Naive thymus-derived CD4-positive, alpha-beta T cell (primary cell): ENCODE measurements at regions of chr20 and their contacts with region 1.

Region 1: DNA sequence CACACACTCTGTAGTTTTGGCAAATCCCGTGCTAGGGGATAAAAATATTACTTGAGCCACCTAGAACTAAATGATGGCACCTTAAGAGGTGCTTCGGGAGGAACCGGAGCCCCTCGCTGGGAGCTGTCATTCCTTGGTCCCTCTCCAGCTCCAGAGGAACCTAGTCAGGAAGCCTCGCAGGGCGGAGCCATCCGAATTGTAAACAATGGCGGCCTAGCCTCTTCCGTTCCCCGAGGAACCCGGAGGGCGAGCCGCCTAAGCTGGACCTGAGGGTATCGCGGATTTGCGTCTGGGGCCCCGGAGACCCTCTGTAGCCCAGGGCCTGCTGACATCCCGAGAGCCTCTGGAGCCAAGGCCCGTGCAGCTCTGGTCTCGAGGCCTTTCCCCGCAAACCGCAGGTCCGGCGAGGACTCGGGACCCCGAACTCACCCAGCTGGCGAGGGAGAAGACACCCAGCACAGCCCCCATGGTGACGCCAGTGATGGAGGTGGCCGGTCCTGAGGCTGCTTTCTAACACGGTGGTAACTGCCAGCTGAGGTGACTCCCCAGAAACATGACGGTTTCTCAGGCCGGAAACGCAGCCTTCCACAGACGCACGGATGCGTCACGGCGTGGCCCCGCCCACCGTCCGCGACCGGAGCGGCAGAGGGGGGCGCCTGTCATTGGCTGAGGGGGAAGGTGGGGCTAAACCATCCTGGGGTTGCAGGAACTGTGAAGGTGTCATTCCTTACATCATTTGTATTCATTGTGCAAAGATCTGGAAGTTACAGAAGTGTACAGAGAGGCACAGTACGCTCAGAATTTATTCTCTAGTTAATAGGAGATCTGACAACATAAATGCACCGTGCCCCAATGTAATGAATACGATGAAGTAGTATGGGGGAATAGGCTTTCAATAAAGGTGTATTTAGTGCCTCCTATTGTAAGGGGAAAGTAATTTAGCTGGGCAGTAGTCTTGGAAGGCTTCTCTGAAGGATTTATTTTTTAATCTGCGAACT is at the start of gene SERINC3:
- DNase-seq: peak; percentile 96 to 99 (median 98)
- ATAC-seq: peak; percentile 99
- H3K4me3 ChIP-seq: peak within 1 kb of the TSS; percentile 95
- H3K4me3 Mint-ChIP-seq: peak within 1 kb of the TSS; percentile 82 to 93 (median 88)
- H3K27ac ChIP-seq: peak within 1 kb of the TSS; percentile 99
- H3K27ac Mint-ChIP-seq: peak within 1 kb of the TSS; percentile 87 to 99 (median 96)
- H3K4me1 ChIP-seq: peaks cover 30 to 34% of the 10 kb centered on the region in 2 donors
- H3K4me1 Mint-ChIP-seq: peaks cover 31 to 68% (median 58%) of the 10 kb centered on the region in 7 donors
- H3K27me3 ChIP-seq: no peaks in the 10 kb centered on the region
- H3K27me3 Mint-ChIP-seq: no peaks in the 10 kb centered on the region
- total RNA-seq, gene SERINC3: 59.7 to 85.3 (median 78.9) TPM

Region 2: GRCh38 chr20:43456809-43457639 is 1064.8 kb before region 1 on chr20:
- CTCF ChIA-PET with region 1: no interaction called
- POLR2A ChIA-PET with region 1: no interaction called
- intact Hi-C with region 1: loop called in 1 of 2 experiments (anchors 5 kb)
- DNase-seq: peak in 7 of 9 donors; percentile 73 to 92 (median 91)
- ATAC-seq: peak; percentile 82
- H3K4me3 ChIP-seq: peak overlapping the region; percentile 86
- H3K4me3 Mint-ChIP-seq: peak overlapping the region; percentile 79 to 100 (median 94)
- H3K27ac ChIP-seq: peak overlapping the region; percentile 100
- H3K27ac Mint-ChIP-seq: peak overlapping the region; percentile 96 to 100 (median 99)
- H3K4me1 ChIP-seq: peaks cover 10 to 29% of the 10 kb centered on the region in 2 donors
- H3K4me1 Mint-ChIP-seq: peaks cover 24 to 42% (median 35%) of the 10 kb centered on the region in 7 donors
- H3K27me3 ChIP-seq: no peaks in the 10 kb centered on the region
- H3K27me3 Mint-ChIP-seq: peaks cover 0 to 14% (median 4%) of the 10 kb centered on the region in 5 donors

Region 3: GRCh38 chr20:44153636-44154043 is 368.1 kb before region 1 on chr20:
- CTCF ChIA-PET with region 1: no interaction called
- POLR2A ChIA-PET with region 1: no interaction called
- intact Hi-C with region 1: loop called in 1 of 2 experiments (anchors 1 kb)
- DNase-seq: peak in 8 of 9 donors; percentile 15 to 77 (median 66)
- ATAC-seq: peak; percentile 90
- H3K4me3 ChIP-seq: no peak overlapping the region
- H3K4me3 Mint-ChIP-seq: peak overlapping the region; percentile 14 to 75 (median 58)
- H3K27ac ChIP-seq: peak overlapping the region; percentile 71
- H3K27ac Mint-ChIP-seq: peak overlapping the region; percentile 34 to 98 (median 92)
- H3K4me1 ChIP-seq: peaks cover 0 to 10% of the 10 kb centered on the region in 2 donors
- H3K4me1 Mint-ChIP-seq: peaks cover 3 to 27% (median 16%) of the 10 kb centered on the region in 7 donors
- H3K27me3 ChIP-seq: no peaks in the 10 kb centered on the region
- H3K27me3 Mint-ChIP-seq: peaks cover 8 to 17% (median 14%) of the 10 kb centered on the region in 5 donors

Region 4: DNA sequence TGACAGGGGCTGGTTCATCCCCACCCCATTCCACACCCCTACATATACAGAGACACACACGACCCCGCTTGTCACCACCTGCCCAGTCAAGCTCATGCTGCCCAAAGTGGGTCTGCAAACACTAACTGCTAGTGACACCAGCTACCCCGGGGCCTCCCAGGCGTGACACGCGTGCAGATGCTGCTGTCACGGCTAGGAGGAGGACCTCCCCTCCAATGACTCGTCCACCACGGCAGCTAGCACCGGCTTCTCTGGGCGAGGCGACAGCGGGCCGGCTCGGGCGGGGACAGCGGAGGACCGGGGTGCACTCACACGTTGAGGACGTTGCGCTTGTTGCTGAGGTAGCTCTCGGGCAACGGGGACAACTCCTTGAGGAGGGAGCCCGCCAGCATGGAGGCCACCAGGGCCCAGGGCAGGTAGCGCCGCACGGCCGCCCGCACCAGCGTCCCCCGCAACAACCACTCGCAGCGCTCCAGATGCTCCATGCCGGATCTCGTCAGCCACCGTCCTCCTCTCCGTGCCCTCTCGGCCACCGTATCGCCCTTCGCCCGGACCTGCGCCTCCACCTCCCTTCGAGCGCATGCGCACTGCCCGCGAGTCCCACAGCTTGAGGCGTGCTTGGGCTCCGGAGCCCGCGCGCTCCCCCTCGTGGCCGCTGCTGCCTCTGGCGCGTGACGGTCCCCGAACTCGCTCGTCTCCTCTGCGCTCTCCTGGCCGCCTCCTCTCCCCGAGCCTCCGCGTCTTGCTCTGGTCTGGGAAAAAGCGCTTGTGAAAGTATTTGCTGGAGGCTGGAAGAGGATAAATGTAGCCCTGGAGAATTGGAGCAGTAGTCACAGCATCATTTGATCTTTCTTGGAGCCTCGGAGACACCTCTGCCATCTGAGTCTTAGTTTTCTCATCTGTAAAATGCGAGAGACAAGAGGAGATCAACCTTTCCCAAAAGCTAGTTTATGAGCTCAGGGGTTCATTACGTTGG is 210.8 kb before region 1 on chr20 and contains the start of gene FITM2:
- CTCF ChIA-PET with region 1: no interaction called
- POLR2A ChIA-PET with region 1: interaction called, 3 read pairs
- intact Hi-C with region 1: loop called in 1 of 2 experiments (anchors 5 kb)
- DNase-seq: peak; percentile 96 to 99 (median 98)
- ATAC-seq: peak; percentile 99
- H3K4me3 ChIP-seq: peak within 1 kb of the TSS; percentile 98
- H3K4me3 Mint-ChIP-seq: peak within 1 kb of the TSS; percentile 87 to 97 (median 95)
- H3K27ac ChIP-seq: peak within 1 kb of the TSS; percentile 82
- H3K27ac Mint-ChIP-seq: peak within 1 kb of the TSS; percentile 91 to 98 (median 93)
- H3K4me1 ChIP-seq: peaks cover 12 to 18% of the 10 kb centered on the region in 2 donors
- H3K4me1 Mint-ChIP-seq: peaks cover 15 to 35% (median 28%) of the 10 kb centered on the region in 7 donors
- H3K27me3 ChIP-seq: no peaks in the 10 kb centered on the region
- H3K27me3 Mint-ChIP-seq: peaks cover 0 to 8% (median 0%) of the 10 kb centered on the region in 5 donors
- total RNA-seq, gene FITM2: 3.1 to 7.9 (median 5.0) TPM

Region 5: DNA sequence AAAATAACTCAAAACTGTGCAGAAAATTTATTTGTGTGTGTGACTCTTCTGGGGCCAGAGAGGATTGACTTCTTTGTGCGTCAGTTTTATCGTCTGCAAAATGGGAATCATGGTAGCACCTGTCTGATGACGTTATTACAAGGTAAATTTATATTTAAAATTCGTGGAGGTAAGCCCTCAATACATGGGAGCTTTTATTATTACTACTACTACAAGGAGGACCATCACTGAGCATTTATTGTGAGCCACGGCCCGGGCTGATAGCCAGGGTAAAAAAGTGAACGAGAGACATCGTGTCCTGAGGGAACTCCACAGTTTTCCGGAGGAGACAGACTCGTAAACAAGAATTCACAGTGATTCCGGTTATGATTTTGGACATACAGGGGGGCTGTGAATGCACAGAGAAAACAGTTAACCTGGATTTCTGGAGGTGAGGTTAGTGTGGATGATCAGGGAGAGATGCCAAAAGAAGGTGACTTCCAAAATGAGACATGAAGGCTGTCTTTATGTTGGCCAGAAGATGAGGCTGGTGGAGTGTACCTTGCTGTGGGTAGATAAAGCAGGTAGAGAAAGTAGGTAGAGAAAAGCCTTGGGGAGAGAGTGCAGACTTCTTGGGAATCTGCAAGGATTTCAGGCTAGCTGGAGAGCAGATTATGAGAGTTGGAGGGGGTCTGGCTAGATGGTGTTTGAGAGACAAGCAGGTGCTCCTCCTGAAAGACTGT is 10.6 kb after region 1 on chr20:
- CTCF ChIA-PET with region 1: no interaction called
- POLR2A ChIA-PET with region 1: interaction called, 5 read pairs
- intact Hi-C with region 1: loop called (anchors 1 kb)
- DNase-seq: peak in 2 of 9 donors; percentile 15 to 20
- ATAC-seq: peak; percentile 6
- H3K4me3 ChIP-seq: peak overlapping the region; percentile 83
- H3K4me3 Mint-ChIP-seq: no peak overlapping the region
- H3K27ac ChIP-seq: peak overlapping the region; percentile 71
- H3K27ac Mint-ChIP-seq: no peak overlapping the region
- H3K4me1 ChIP-seq: peaks cover 5 to 19% of the 10 kb centered on the region in 2 donors
- H3K4me1 Mint-ChIP-seq: peaks cover 0 to 8% (median 4%) of the 10 kb centered on the region in 7 donors
- H3K27me3 ChIP-seq: no peaks in the 10 kb centered on the region
- H3K27me3 Mint-ChIP-seq: peaks cover 0 to 11% (median 0%) of the 10 kb centered on the region in 5 donors

Region 6: DNA sequence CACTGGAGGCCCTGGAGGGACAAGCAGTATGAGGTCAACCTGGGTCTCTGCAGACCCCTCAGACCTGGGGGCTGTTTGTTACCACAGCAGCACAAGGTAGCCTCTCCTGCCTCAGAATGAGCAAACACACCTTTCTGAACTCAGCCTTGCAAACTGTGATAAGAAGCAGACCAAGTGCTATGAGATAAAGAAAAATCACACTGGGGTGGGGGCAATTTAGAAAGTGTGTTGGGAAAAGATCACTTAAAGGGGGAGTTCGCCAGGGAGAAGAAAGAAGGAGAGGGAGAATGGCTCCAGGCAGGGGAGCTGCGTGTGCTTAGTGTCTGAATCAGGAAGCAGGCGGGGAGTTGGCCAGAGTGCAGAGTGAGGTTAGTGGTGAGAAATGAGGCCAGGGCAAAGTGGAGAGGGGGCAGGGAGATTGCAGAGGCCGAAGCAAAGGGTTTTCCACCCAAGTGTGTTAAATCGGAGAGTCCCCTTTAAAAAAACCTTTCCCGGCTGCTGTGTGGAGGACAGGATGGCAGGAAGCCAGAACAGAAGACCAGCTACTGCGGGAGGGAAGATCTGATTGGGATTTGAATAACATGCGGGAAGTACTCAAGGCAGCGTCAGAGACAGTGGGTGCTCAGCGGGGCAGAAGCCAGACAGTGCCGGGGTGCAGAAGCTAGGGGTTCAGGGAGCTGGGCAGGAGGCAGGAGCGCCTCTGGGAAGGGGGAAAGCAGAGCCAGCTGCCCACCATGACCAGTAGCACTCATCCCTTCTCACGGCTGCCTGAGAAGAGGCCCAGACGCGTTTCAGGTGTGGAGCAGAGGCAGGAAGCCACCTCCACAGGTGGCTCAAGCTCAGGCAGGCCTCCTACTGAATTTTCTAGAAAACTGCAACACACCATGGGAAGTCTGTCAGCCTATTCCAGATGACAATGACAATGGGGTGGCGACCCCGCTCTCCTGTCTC is 120.7 kb after region 1 on chr20:
- CTCF ChIA-PET with region 1: no interaction called
- POLR2A ChIA-PET with region 1: interaction called, 4 read pairs
- intact Hi-C with region 1: loop called (anchors 1 to 2 kb)
- DNase-seq: peak in 8 of 9 donors; percentile 28 to 54 (median 41)
- ATAC-seq: peak; percentile 33
- H3K4me3 ChIP-seq: peak overlapping the region; percentile 47
- H3K4me3 Mint-ChIP-seq: peak overlapping the region; percentile 63 to 96 (median 76)
- H3K27ac ChIP-seq: peak overlapping the region; percentile 76
- H3K27ac Mint-ChIP-seq: peak overlapping the region; percentile 90 to 98 (median 96)
- H3K4me1 ChIP-seq: peaks cover 53 to 70% of the 10 kb centered on the region in 2 donors
- H3K4me1 Mint-ChIP-seq: peaks cover 55 to 82% (median 70%) of the 10 kb centered on the region in 7 donors
- H3K27me3 ChIP-seq: no peaks in the 10 kb centered on the region
- H3K27me3 Mint-ChIP-seq: no peaks in the 10 kb centered on the region

Region 7: GRCh38 chr20:44733341-44734069 is 211.7 kb after region 1 on chr20:
- CTCF ChIA-PET with region 1: no interaction called
- POLR2A ChIA-PET with region 1: no interaction called
- intact Hi-C with region 1: loop called (anchors 5 to 10 kb)
- DNase-seq: peak; percentile 34 to 73 (median 57)
- ATAC-seq: peak; percentile 77
- H3K4me3 ChIP-seq: no peak overlapping the region
- H3K4me3 Mint-ChIP-seq: no peak overlapping the region
- H3K27ac ChIP-seq: no peak overlapping the region
- H3K27ac Mint-ChIP-seq: peak overlapping the region in 1 of 9 donors; percentile 32
- H3K4me1 ChIP-seq: no peaks in the 10 kb centered on the region
- H3K4me1 Mint-ChIP-seq: peaks cover 11 to 23% (median 20%) of the 10 kb centered on the region in 7 donors
- H3K27me3 ChIP-seq: no peaks in the 10 kb centered on the region
- H3K27me3 Mint-ChIP-seq: no peaks in the 10 kb centered on the region

Region 8: GRCh38 chr20:45406259-45407066 is 884.7 kb after region 1 on chr20:
- CTCF ChIA-PET with region 1: no interaction called
- POLR2A ChIA-PET with region 1: no interaction called
- intact Hi-C with region 1: no loop called
- DNase-seq: peak in 8 of 9 donors; percentile 22 to 68 (median 44)
- ATAC-seq: peak; percentile 58
- H3K4me3 ChIP-seq: peak overlapping the region; percentile 71
- H3K4me3 Mint-ChIP-seq: peak overlapping the region; percentile 82 to 92 (median 85)
- H3K27ac ChIP-seq: peak overlapping the region; percentile 74
- H3K27ac Mint-ChIP-seq: peak overlapping the region in 8 of 9 donors; percentile 51 to 90 (median 78)
- H3K4me1 ChIP-seq: peaks cover 0 to 7% of the 10 kb centered on the region in 2 donors
- H3K4me1 Mint-ChIP-seq: peaks cover 5 to 27% (median 21%) of the 10 kb centered on the region in 7 donors
- H3K27me3 ChIP-seq: no peaks in the 10 kb centered on the region
- H3K27me3 Mint-ChIP-seq: peaks cover 0 to 19% (median 0%) of the 10 kb centered on the region in 5 donors